ENCODE measurements at regions of chr6 and their contacts with region 1.

Region 1: DNA sequence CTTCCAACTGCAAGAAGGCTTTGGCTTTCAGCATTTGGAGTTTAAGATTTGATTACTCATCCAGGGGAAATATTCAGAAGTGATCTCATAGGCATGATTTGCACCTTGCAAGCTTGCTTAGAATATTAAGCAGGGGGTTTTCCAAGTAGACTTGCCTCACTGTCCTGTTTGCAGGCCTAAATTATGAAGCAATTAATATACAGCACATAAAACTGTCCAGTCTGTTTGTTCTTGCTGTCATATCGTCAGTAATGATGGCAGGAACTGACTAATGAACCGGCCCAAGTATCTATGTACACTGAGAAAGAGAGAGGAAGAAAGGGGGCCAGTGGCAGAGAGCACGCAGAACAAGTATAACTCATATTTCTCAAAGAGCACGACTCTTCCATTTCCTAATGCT is 212.5 kb upstream of the SUPT3H start:
- DNase-seq: no peak
- H3K4me3 Mint-ChIP-seq: no peak overlapping the region
- H3K27ac Mint-ChIP-seq: peak overlapping the region; percentile 74
- H3K4me1 Mint-ChIP-seq: peaks cover 87% of the 10 kb centered on the region
- H3K27me3 Mint-ChIP-seq: no peaks in the 10 kb centered on the region

Region 2: DNA sequence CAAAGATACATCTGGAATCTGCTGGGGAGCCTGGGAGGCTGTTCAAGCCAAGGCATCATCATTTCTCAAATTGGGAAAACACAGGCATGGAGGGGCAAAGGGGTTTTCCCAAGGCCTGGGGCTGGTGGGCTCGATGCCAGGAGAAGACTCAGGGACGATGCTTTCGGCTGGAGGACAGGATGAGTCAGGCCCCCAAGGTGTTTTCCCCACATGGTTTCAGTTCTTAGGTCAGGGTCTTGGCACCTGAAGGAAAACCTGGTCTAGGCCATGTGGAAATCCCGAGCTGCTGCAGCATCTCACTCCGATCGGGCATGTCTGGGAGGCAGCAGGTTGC is 854.6 kb before region 1 on chr6:
- intact Hi-C with region 1: no loop called
- DNase-seq: no peak
- H3K4me3 Mint-ChIP-seq: no peak overlapping the region
- H3K27ac Mint-ChIP-seq: no peak overlapping the region
- H3K4me1 Mint-ChIP-seq: peaks cover 5% of the 10 kb centered on the region
- H3K27me3 Mint-ChIP-seq: no peaks in the 10 kb centered on the region

Region 3: GRCh38 chr6:45187836-45188235 is 402.4 kb before region 1 on chr6:
- intact Hi-C with region 1: no loop called
- DNase-seq: no peak
- H3K4me3 Mint-ChIP-seq: no peak overlapping the region
- H3K27ac Mint-ChIP-seq: peak overlapping the region; percentile 22
- H3K4me1 Mint-ChIP-seq: peaks cover 36% of the 10 kb centered on the region
- H3K27me3 Mint-ChIP-seq: no peaks in the 10 kb centered on the region

Region 4: DNA sequence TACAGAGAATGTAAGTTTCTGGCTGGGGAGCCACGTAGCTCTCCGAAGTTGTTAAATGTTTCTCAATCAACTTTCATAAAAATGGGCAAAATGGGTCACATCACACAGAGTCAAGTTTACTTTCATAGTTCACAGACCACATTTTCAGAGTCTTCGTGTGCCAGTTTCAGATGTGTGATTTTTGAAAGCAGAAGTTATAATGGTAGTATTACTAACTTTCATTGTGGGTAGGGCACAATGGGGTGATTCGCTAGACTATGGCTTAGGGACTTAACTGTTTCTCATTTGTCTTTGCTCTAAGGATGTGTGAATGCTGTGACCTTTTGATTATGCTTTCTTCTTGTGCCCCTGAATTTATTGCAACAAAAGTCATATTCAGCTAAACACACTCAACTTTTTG is 103.5 kb before region 1 on chr6:
- intact Hi-C with region 1: loop called (anchors 5 kb)
- DNase-seq: no peak
- H3K4me3 Mint-ChIP-seq: no peak overlapping the region
- H3K27ac Mint-ChIP-seq: no peak overlapping the region
- H3K4me1 Mint-ChIP-seq: peaks cover 45% of the 10 kb centered on the region
- H3K27me3 Mint-ChIP-seq: no peaks in the 10 kb centered on the region

Region 5: GRCh38 chr6:45571159-45571558 is 19.1 kb before region 1 on chr6:
- intact Hi-C with region 1: loop called (anchors 2 kb)
- DNase-seq: no peak
- H3K4me3 Mint-ChIP-seq: no peak overlapping the region
- H3K27ac Mint-ChIP-seq: no peak overlapping the region
- H3K4me1 Mint-ChIP-seq: peaks cover 40% of the 10 kb centered on the region
- H3K27me3 Mint-ChIP-seq: no peaks in the 10 kb centered on the region

Region 6: GRCh38 chr6:45626087-45626891 is 36.1 kb after region 1 on chr6:
- intact Hi-C with region 1: loop called (anchors 2 kb)
- DNase-seq: no peak
- H3K4me3 Mint-ChIP-seq: no peak overlapping the region
- H3K27ac Mint-ChIP-seq: peak overlapping the region; percentile 41
- H3K4me1 Mint-ChIP-seq: peaks cover 36% of the 10 kb centered on the region
- H3K27me3 Mint-ChIP-seq: no peaks in the 10 kb centered on the region

Measured in activated T-helper 1 cell treated with anti-CD3 and anti-CD28 coated beads, Interleukin-12 subunit alpha, Interleukin-12 subunit beta, Interleukin-2, Interleukin-4 antibody, amounts not matched to agents 30 ng/mL and 10 ng/mL and 1 ng/mL, durations not matched to agents 14 hours and 24 hours and 36 hours (primary cell).